Sigmoid colon (tissue), 7 donors: ENCODE measurements at regions of chr1 and their contacts with region 1.

Region 1: DNA sequence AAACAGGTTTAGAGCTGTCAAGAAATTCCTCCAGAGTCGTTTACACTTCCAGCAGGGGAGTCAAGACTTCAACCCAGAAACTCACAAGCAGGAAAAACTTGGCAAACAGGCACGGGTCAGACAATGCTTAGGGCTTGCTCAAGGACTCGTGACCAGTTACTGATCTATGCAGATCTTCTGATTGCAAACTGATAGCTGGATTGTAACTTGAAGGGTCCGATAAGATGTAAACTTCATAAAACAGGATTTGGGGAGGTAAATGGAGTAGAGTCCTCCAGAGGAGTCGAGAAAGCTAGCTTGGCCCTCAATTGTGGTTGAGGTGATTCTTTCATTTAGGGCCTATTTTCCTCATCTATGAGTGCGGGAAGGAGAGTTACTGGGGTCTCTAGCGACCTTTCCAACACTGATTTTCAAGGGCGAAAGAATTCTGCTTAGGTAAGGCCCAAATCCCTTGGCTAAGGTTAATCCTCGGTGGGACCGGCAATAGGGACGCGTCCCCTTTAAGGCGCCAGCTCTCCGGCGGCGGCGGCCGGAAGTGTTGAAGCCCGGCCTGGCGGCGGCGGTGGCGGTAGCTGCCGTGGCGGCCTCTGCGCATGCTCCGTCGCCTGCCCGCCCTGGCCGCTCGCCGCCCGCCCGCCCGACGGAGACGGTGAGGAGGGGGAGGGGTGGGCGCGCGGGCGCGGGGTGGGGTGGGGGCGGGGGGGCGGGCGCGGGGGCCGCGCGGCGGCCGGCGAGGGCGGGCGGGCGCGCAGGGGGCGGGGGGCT is at the start of gene GMEB1:
- DNase-seq: peak; percentile 94
- H3K4me3 ChIP-seq: peak within 1 kb of the TSS; percentile 95 to 100 (median 98)
- H3K27ac ChIP-seq: peak within 1 kb of the TSS; percentile 99 to 100 (median 100)
- H3K4me1 ChIP-seq: peaks cover 0 to 20% (median 19%) of the 10 kb centered on the region in 4 donors
- H3K27me3 ChIP-seq: no peaks in the 10 kb centered on the region
- CTCF ChIP-seq: no peak
- EP300 ChIP-seq: no peak
- POLR2A ChIP-seq: no peak
- total RNA-seq, gene GMEB1: 6.1 to 7.3 (median 6.8) TPM

Region 2: DNA sequence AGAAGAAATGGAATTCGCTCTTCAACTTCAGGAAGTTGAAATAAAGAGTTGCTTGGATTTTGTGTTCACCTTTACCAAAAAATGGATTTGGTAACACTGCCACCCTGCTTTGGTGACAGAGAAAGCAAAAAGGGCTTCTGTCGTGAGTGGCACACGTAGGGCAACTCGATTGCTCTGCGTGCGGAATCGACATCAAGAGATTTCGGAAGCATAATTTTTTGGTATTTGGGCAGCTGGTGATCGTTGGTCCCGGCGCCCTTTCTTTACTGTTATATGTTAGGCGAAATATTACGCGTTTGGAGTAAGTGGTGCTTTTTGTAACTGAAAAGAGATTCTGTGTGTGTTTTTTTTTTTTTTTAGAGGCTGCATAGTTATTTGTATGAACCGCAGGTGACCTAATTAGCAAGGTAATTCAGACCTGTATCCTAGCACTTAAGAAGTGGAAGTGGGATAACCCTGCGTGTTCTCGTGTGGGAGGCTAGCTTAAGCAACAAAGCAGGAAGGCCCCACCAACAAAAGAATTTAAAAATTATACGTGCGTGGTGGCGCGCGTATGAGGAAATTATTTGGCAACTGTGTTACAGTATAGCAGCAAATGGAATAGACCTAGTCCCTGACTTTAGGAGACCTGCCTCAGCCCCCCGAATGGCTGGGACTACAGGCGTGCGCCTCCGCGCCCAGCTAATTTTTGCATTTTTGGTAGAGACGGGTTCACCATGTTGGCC is 19.7 kb before region 1 on chr1 and contains the start of gene RNU11:
- intact Hi-C with region 1: loop called (anchors 1 kb)
- DNase-seq: peak; percentile 95
- H3K4me3 ChIP-seq: peak within 1 kb of the TSS; percentile 18 to 48 (median 46)
- H3K27ac ChIP-seq: peak within 1 kb of the TSS; percentile 86 to 93 (median 90)
- H3K4me1 ChIP-seq: peaks cover 0 to 27% (median 21%) of the 10 kb centered on the region in 4 donors
- H3K27me3 ChIP-seq: no peaks in the 10 kb centered on the region
- CTCF ChIP-seq: peak in 1 of 4 experiments; percentile 26
- EP300 ChIP-seq: peak in 1 of 4 donors; percentile 22
- POLR2A ChIP-seq: peak; percentile 99 to 100
- total RNA-seq, gene RNU11: not detected

Region 3: DNA sequence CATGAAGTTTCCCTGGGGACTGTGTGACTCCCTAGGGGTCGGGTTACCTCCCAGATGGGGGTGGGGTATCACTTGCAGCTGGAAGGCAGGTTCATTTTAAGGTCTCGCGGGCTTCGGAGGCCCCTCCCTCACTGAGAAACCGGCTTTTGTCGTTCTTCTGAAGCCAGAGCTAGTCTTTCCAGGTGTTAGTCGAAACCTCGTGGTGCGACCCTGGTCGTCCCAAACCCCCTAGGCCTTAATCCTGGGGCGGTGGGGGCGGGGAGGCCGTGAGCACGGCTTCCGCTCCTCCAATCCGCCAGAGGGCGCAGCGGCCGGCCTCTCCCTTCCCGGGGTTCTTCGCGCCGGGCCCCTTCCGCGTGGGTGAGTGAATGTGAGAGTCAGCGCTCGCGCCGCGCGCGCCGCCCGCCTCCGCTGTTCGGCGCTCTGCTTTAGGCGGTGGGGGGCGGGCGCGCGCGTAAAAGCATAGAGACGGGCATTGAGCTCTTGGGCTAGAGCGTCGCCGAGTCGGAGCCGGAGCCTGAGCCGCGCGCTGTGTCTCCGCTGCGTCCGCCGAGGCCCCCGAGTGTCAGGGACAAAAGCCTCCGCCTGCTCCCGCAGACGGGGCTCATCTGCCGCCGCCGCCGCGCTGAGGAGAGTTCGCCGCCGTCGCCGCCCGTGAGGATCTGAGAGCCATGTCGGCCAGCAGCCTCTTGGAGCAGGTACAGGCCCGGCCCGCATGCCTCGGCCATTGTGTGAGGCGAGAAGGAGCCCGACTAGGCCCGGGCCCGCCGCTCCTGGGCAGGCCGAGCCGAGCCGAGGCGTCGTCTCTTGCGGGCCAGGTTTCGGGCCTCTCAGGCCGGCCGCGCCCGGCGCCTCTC is 68.3 kb after region 1 on chr1 and contains the start of gene YTHDF2:
- intact Hi-C with region 1: loop called (anchors 2 kb)
- DNase-seq: peak; percentile 98
- H3K4me3 ChIP-seq: peak within 1 kb of the TSS; percentile 85 to 97 (median 92)
- H3K27ac ChIP-seq: peak within 1 kb of the TSS; percentile 96 to 97 (median 96)
- H3K4me1 ChIP-seq: peaks cover 0 to 50% (median 43%) of the 10 kb centered on the region in 4 donors
- H3K27me3 ChIP-seq: no peaks in the 10 kb centered on the region
- CTCF ChIP-seq: peak; percentile 85 to 96 (median 90)
- EP300 ChIP-seq: no peak
- POLR2A ChIP-seq: peak; percentile 86 to 87
- total RNA-seq, gene YTHDF2: 37.9 to 47.0 (median 42.7) TPM